ENCODE measurements at regions of chr11 and their contacts with region 1.

Region 1: GRCh38 chr11:131064373-131064991 is 148.2 kb upstream of the SNX19 start:
- DNase-seq: peak; percentile 92
- H3K4me3 ChIP-seq: no peak overlapping the region
- H3K27ac ChIP-seq: no peak overlapping the region
- H3K4me1 ChIP-seq: no peaks in the 10 kb centered on the region
- H3K27me3 ChIP-seq: peaks cover 0 to 12% (median 0%) of the 10 kb centered on the region in 4 donors
- CTCF ChIP-seq: peak; percentile 71 to 82 (median 71)
- EP300 ChIP-seq: no peak
- POLR2A ChIP-seq: no peak

Region 2: DNA sequence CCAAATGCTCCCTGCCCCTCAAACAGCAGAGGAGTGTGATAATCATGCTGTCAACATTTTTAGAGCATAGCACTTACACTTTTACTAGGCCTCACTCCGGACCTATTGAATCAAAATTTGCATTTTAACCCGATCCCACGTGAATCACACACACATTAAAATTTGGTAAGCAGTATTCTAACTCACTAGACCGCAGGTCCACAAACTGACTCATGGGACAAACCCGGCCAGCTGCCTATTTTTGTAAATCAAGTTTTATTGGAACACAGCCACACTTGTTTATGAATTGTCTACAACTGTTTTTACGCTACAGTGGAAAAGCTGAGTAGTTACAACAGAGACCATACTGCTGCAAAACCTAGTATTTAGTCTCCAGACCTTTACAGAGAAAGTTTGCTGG is 191.5 kb before region 1 on chr11:
- intact Hi-C with region 1: no loop called
- DNase-seq: no peak
- H3K4me3 ChIP-seq: no peak overlapping the region
- H3K27ac ChIP-seq: peak overlapping the region; percentile 12 to 60 (median 40)
- H3K4me1 ChIP-seq: peaks cover 26 to 40% (median 33%) of the 10 kb centered on the region in 4 donors
- H3K27me3 ChIP-seq: no peaks in the 10 kb centered on the region
- CTCF ChIP-seq: no peak
- EP300 ChIP-seq: no peak
- POLR2A ChIP-seq: no peak

Region 3: GRCh38 chr11:131129474-131129873 is 65.0 kb after region 1 on chr11:
- intact Hi-C with region 1: no loop called
- DNase-seq: no peak
- H3K4me3 ChIP-seq: no peak overlapping the region
- H3K27ac ChIP-seq: no peak overlapping the region
- H3K4me1 ChIP-seq: no peaks in the 10 kb centered on the region
- H3K27me3 ChIP-seq: peaks cover 0 to 7% (median 0%) of the 10 kb centered on the region in 4 donors
- CTCF ChIP-seq: no peak
- EP300 ChIP-seq: no peak
- POLR2A ChIP-seq: no peak

Region 4: GRCh38 chr11:131204765-131205380 is 140.4 kb after region 1 on chr11:
- intact Hi-C with region 1: no loop called
- DNase-seq: no peak
- H3K4me3 ChIP-seq: no peak overlapping the region
- H3K27ac ChIP-seq: no peak overlapping the region
- H3K4me1 ChIP-seq: no peaks in the 10 kb centered on the region
- H3K27me3 ChIP-seq: no peaks in the 10 kb centered on the region
- CTCF ChIP-seq: no peak
- EP300 ChIP-seq: no peak
- POLR2A ChIP-seq: no peak

Region 5: DNA sequence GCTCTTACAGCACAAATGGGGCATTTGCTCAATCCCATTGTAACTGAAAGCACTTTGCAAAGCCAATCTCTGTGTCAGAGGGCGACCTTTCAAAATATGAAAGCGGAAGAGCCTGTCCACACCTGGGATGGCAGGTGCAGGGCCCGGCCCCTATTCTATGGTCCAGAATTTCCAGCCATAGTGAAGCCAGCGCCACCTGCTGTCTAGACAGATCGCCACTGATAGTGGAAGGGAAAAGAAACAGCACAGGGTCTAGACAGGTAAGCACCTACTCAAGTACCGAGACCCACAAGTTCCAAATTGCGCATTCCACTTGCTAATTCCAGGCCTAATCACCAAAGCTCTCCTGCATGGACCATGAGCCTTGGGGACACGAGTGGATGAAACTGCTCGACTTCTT is 447.3 kb after region 1 on chr11:
- intact Hi-C with region 1: loop called (anchors 5 kb)
- DNase-seq: no peak
- H3K4me3 ChIP-seq: no peak overlapping the region
- H3K27ac ChIP-seq: no peak overlapping the region
- H3K4me1 ChIP-seq: no peaks in the 10 kb centered on the region
- H3K27me3 ChIP-seq: no peaks in the 10 kb centered on the region
- CTCF ChIP-seq: peak; percentile 33 to 43 (median 34)
- EP300 ChIP-seq: no peak
- POLR2A ChIP-seq: no peak

Region 6: GRCh38 chr11:131674051-131674755 is 609.7 kb after region 1 on chr11:
- intact Hi-C with region 1: loop called (anchors 2 kb)
- DNase-seq: peak; percentile 94
- H3K4me3 ChIP-seq: no peak overlapping the region
- H3K27ac ChIP-seq: no peak overlapping the region
- H3K4me1 ChIP-seq: peaks cover 0 to 19% (median 14%) of the 10 kb centered on the region in 4 donors
- H3K27me3 ChIP-seq: no peaks in the 10 kb centered on the region
- CTCF ChIP-seq: peak in 2 of 3 experiments; percentile 88 to 93
- EP300 ChIP-seq: no peak
- POLR2A ChIP-seq: no peak

Measured in esophagus muscularis mucosa (tissue), 4 donors.